Adrenal gland (tissue), 19 donors: ENCODE measurements at regions of chr18 and their contacts with region 1.

Region 1: DNA sequence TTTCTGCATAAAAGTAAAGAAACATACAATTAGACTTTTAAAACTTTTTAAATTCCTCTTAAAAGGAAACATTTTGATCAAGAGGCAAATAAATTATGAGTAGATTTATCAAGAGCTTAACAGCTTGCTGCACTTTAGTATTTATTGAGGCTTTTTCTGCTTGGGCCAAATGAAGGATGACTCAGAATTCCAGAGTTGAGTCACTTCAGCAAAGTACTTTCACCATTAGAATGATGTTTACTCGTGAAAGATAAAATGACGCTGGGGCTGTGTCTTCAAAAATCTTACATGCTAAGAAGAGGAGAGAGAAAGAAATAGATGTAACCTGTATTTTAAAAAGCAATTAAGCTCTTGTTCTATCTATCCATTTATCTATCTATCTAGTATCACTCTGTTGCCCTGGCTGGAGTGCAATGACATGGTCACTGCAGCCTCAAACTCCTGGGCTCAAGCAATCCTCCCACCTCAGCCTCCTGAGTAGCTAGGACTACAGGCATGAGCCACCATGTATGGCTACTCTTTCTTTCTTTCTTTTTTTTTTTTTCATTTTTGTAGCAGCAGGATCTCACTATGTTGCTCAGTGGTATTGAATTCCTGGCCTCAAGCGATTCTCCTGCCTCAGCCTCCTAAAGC is 75.3 kb upstream of the RIOK3 start:
- DNase-seq: peak in 3 of 7 donors; percentile 33 to 41 (median 36)
- H3K4me3 ChIP-seq: no peak overlapping the region
- H3K27ac ChIP-seq: peak overlapping the region in 4 of 5 donors; percentile 58 to 77 (median 74)
- H3K4me1 ChIP-seq: peaks cover 0 to 17% of the 10 kb centered on the region in 2 donors
- H3K27me3 ChIP-seq: no peaks in the 10 kb centered on the region
- CTCF ChIP-seq: no peak
- POLR2A ChIP-seq: no peak

Region 2: GRCh38 chr18:23032030-23032582 is 345.7 kb before region 1 on chr18:
- intact Hi-C with region 1: loop called in 1 of 2 experiments (anchors 10 kb)
- DNase-seq: no peak
- H3K4me3 ChIP-seq: no peak overlapping the region
- H3K27ac ChIP-seq: no peak overlapping the region
- H3K4me1 ChIP-seq: no peaks in the 10 kb centered on the region
- H3K27me3 ChIP-seq: no peaks in the 10 kb centered on the region
- CTCF ChIP-seq: no peak
- POLR2A ChIP-seq: no peak

Region 3: DNA sequence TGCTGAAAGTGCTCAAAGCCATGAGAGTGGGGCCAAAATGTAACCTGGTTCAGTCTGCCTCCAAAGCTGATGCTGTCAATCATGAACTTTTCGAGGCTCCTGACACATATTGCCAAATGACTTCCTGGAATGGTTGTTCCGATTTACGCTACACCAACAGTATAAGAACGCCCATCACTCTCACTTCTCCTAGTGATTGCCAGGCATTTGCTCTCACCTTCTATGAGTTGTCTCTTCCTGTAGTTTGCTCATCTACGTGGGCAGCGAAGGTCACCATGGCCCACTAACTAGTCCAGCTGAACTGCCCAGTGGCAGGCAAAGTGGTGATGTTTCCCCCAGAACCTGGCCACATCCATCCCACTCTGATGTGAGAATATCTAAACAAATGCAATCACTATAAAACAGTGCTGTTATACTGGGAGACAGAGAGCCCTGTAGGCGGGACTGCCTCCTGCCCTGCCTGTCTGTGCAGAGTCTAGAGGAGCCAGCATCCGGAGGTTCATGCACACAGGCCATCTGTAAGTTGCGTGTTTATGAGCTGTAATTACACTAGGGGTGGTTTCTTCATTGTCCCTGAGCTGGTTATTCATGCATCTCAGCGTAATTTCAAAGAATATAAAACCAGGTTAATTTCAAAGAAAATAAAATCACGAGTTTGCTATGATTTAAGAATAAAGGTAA is 251.3 kb before region 1 on chr18:
- intact Hi-C with region 1: loop called (anchors 2 to 5 kb)
- DNase-seq: no peak
- H3K4me3 ChIP-seq: no peak overlapping the region
- H3K27ac ChIP-seq: no peak overlapping the region
- H3K4me1 ChIP-seq: peaks cover 0 to 16% of the 10 kb centered on the region in 2 donors
- H3K27me3 ChIP-seq: no peaks in the 10 kb centered on the region
- CTCF ChIP-seq: no peak
- POLR2A ChIP-seq: no peak

Region 4: DNA sequence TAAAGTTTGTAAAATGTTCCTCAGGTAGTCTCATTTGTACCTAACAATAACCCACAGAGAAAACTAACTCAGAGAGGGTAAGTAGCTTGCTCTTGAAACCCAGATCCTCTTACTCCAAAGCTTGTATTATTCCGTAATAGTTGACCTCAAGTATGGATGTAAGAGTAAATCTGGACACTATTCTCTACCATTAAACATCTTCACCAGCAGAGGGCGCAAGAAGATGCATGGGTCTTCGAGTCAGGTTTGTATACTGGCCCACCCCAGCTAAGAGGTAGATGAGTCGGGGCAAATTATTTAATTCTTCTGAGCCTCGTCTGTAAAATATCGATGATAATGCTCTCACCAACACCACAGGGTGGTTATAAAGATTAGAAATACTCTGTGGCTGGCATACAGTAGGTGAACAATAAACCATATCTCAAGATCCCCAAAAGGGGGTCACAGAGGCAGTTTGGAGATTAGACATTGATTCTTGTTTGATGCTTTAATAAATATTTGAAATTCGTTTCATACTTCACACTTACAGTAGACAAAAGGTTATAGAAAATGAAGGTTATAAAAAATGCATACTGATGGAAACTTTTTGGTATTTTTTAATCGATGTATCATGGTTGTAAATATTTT is 246.0 kb before region 1 on chr18:
- intact Hi-C with region 1: loop called (anchors 2 to 5 kb)
- DNase-seq: peak; percentile 45 to 82 (median 70)
- H3K4me3 ChIP-seq: no peak overlapping the region
- H3K27ac ChIP-seq: no peak overlapping the region
- H3K4me1 ChIP-seq: peaks cover 0 to 30% of the 10 kb centered on the region in 2 donors
- H3K27me3 ChIP-seq: no peaks in the 10 kb centered on the region
- CTCF ChIP-seq: peak; percentile 74 to 89 (median 82)
- POLR2A ChIP-seq: no peak